PC-3 (cell line): ENCODE measurements at regions of chr10 and their contacts with region 1.

Region 1: DNA sequence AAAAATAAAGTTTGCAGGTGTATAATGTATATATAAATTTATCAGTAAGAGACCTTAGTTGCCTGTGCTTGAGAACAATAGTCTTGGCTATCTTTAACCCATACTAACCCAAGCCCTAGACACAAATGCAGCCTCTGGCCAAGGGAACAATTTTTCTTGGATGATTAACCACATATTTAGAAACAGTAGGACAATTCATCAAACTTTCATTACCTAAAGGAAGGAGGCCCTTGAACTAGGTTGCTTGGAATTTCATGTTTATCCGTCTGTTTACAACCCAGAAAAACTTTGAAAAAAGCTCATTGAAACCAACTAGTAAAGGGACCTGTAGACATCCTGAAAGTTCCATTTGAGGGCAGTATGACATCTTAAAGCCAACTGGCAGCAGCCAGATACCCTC is 8.9 kb upstream of the ERLIN1 start:
- DNase-seq: no peak
- ATAC-seq: no peak
- H3K4me3 ChIP-seq: no peak overlapping the region
- H3K27ac ChIP-seq: no peak overlapping the region
- H3K4me1 ChIP-seq: no peaks in the 10 kb centered on the region
- H3K27me3 ChIP-seq: no peaks in the 10 kb centered on the region
- CTCF ChIP-seq: no peak

Region 2: DNA sequence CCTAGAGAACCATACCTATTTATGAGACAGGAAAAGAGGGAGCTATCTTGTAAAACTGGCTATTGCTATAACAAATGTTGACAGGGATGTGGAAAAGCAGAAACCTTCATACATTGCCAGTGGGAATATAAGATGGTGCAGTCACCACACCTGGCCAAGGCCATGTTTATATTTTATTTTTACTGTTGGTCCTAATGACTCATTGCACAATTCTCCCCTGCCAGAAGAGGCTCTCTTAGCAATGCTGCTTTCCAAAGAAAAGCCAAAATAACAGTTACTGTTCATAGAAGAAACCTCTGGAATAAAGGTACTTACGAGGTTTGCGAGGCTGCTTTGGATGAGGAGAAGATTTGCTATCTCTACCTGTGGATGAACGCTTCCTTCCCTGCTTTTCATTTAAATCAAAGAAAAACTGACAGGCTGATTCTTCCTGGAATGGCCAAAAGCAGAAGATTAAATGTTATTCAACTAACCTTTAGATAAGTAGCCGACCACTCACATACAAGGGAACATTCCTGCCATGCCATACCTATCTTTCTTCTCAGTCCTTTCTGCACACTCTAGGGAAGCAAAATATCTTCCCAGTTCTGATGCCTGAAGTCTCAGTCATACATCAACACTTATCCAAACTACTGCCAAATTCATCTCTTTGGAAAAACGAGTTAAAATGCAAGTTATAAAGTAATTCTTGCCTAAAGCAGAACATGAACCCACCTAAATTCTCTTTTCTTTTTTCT is 50.9 kb after region 1 on chr10:
- CTCF ChIA-PET with region 1: no interaction called
- POLR2A ChIA-PET with region 1: no interaction called
- intact Hi-C with region 1: loop called (anchors 2 kb)
- DNase-seq: no peak
- ATAC-seq: peak; percentile 50; the same call in 1 of the 2 replicates
- H3K4me3 ChIP-seq: no peak overlapping the region
- H3K27ac ChIP-seq: no peak overlapping the region
- H3K4me1 ChIP-seq: no peaks in the 10 kb centered on the region
- H3K27me3 ChIP-seq: no peaks in the 10 kb centered on the region
- CTCF ChIP-seq: no peak

Region 3: DNA sequence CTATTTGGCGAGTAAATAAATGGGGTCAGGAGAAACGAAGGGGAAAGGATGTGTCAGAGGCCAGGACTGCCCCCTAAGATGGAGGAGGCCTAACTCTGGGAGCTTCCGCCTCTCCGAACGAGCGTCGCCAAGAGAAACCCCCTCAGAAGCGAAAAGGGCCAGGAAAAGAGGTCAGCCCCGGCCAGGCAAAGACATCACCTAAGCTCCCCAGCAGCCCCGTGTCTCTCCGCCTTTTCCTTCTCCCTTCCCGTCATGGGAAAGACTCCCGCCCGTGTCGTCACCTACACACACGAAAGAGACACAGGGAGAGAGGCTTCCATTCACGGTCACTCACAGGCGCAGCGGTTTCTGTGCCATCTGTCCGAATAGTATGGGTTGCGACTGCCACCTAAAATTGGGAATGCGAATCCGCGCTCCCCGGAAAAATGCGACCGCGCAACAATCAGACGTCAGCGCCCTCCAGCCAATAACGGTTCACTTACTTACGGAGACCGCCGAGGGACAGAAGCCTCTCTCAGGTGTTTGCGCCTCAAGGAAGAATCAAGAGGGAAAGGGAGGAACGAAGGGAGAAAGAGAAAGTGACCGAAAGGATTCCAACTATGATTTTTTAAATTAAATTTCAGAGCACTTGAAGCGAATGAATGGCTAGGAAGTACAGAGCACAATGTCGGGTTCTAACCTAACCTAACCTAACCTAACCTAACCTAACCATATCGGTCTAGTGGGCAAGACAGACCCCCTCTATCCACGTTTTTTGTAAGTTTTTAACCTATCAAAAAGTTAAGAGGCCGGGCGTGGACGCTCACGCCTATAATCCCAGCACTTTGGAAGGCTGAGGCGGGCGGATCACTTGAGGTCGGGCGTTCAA is 72.8 kb after region 1 on chr10 and contains the start of gene CWF19L1:
- CTCF ChIA-PET with region 1: no interaction called
- POLR2A ChIA-PET with region 1: no interaction called
- intact Hi-C with region 1: no loop called
- DNase-seq: peak; percentile 77
- ATAC-seq: peak; percentile 92
- H3K4me3 ChIP-seq: peak within 1 kb of the TSS; percentile 87
- H3K27ac ChIP-seq: peak within 1 kb of the TSS; percentile 47
- H3K4me1 ChIP-seq: no peaks in the 10 kb centered on the region
- H3K27me3 ChIP-seq: no peaks in the 10 kb centered on the region
- CTCF ChIP-seq: no peak
- total RNA-seq, gene CWF19L1: 30.4 and 31.4 TPM in 2 replicates